Heart right ventricle (tissue), 16 donors: ENCODE measurements at regions of chr4 and their contacts with region 1.

Region 1: DNA sequence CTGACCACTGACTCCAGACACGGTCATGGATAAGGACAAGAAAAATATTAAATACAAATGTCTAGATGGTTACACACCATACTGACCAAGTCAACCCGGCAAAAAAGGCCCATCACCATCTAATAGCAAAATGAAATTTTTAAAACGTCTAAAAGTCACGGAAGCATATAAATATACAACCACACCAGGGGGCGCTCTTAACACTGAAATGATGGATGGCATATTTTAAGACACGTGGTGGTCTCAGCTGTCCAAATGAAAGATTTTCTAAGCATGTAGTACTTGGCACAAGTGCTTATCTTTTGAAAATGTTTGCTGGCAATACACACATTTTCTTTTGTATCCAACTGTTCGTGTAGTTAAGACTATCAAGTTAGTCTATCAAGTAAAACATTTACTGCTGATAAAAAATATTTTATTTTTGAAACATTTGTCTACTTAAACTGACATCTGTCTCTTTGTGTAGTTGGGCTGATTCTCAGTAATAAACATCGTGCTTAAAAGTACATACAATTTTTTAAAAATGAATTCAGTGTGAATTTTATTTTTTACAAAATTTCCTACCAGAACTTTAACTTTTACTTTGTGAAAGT is 64.6 kb downstream of the COX7B2 start:
- DNase-seq: peak in 1 of 2 donors; percentile 42
- ATAC-seq: no peak
- H3K4me3 ChIP-seq: no peak overlapping the region
- H3K27ac ChIP-seq: no peak overlapping the region
- H3K4me1 ChIP-seq: peaks cover 0 to 4% (median 0%) of the 10 kb centered on the region in 9 donors
- H3K27me3 ChIP-seq: no peaks in the 10 kb centered on the region
- CTCF ChIP-seq: peak in 8 of 9 donors; percentile 37 to 78 (median 69)

Region 2: DNA sequence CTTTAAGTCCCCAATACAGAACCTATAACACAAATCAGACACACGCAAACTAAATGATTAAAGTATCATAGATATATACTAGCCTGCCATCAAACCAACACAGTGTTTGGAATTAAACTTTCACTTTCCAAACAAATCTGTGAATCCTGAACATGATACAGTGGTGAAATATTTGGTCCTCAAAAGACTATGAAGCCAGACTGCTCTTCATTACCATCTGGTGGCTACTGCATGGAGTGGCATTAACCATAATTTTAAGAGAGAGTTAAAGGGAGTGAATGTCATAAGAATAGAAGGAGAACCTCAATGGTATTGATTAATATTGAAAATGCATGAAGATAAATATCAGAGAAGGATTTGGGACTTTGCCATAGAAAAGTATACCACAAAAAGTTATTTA is 158.2 kb after region 1 on chr4:
- intact Hi-C with region 1: loop called in 2 of 10 experiments (anchors 10 kb)
- DNase-seq: no peak
- ATAC-seq: peak in 3 of 8 donors; percentile 55 to 65 (median 58)
- H3K4me3 ChIP-seq: no peak overlapping the region
- H3K27ac ChIP-seq: no peak overlapping the region
- H3K4me1 ChIP-seq: peaks cover 0 to 9% (median 0%) of the 10 kb centered on the region in 9 donors
- H3K27me3 ChIP-seq: no peaks in the 10 kb centered on the region
- CTCF ChIP-seq: peak in 8 of 9 donors; percentile 5 to 59 (median 44)

Region 3: DNA sequence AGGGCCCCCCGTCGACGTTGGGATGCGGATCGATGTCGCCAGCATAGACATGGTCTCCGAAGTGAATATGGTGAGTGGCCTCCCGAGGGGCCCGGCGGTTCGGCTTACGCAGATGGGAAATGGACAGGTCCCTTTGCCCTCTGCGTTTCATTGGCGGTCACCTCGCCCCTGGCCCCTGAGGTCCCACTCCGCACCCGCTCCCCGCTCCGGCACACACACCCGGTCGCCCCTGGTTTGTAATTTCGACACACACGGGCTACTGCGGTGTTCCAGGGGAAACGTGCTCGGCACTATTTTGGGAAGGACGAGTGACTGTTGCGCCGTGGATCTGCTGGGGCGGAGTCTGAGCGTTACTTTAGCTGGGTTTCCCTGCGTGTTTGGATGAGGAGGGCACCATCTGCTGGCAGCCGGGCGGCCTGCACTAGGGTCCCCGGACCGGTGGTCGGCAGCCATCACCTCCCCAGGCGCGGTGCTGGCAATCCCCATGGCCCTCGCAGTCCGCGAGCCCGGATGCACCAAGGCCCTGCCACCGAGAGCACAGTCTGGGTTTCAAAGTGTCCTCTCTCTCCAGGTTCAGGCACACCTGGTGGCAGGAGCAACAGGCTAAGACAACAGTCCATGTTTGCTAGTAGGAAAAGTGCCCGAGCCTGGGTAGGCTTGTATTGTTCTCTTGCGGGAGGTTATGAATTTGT is 188.1 kb after region 1 on chr4:
- intact Hi-C with region 1: loop called in 9 of 10 experiments (anchors 2 to 10 kb)
- DNase-seq: peak; percentile 59 to 60
- ATAC-seq: peak; percentile 83 to 98 (median 96)
- H3K4me3 ChIP-seq: peak overlapping the region; percentile 9 to 60 (median 53)
- H3K27ac ChIP-seq: peak overlapping the region in 6 of 10 donors; percentile 5 to 80 (median 75)
- H3K4me1 ChIP-seq: peaks cover 0 to 15% (median 0%) of the 10 kb centered on the region in 9 donors
- H3K27me3 ChIP-seq: peaks cover 0 to 59% (median 15%) of the 10 kb centered on the region in 7 donors
- CTCF ChIP-seq: peak; percentile 39 to 77 (median 71)

Region 4: GRCh38 chr4:47038263-47038662 is 193.8 kb after region 1 on chr4:
- intact Hi-C with region 1: loop called in 9 of 10 experiments (anchors 2 to 10 kb)
- DNase-seq: no peak
- ATAC-seq: no peak
- H3K4me3 ChIP-seq: no peak overlapping the region
- H3K27ac ChIP-seq: no peak overlapping the region
- H3K4me1 ChIP-seq: peaks cover 0 to under 1% (median 0%) of the 10 kb centered on the region in 9 donors
- H3K27me3 ChIP-seq: peaks cover 0 to 23% (median 0%) of the 10 kb centered on the region in 7 donors
- CTCF ChIP-seq: no peak

Region 5: GRCh38 chr4:47122592-47123291 is 278.3 kb after region 1 on chr4:
- intact Hi-C with region 1: loop called in 6 of 10 experiments (anchors 5 to 10 kb)
- DNase-seq: peak in 1 of 2 donors; percentile 48
- ATAC-seq: peak in 5 of 8 donors; percentile 20 to 74 (median 64)
- H3K4me3 ChIP-seq: no peak overlapping the region
- H3K27ac ChIP-seq: no peak overlapping the region
- H3K4me1 ChIP-seq: peaks cover 0 to 4% (median 0%) of the 10 kb centered on the region in 9 donors
- H3K27me3 ChIP-seq: no peaks in the 10 kb centered on the region
- CTCF ChIP-seq: peak; percentile 47 to 84 (median 74)

Region 6: GRCh38 chr4:47383829-47384427 is 539.5 kb after region 1 on chr4:
- intact Hi-C with region 1: loop called in 7 of 10 experiments (anchors 5 to 10 kb)
- DNase-seq: no peak
- ATAC-seq: no peak
- H3K4me3 ChIP-seq: no peak overlapping the region
- H3K27ac ChIP-seq: no peak overlapping the region
- H3K4me1 ChIP-seq: peaks cover 0 to 3% (median 0%) of the 10 kb centered on the region in 9 donors
- H3K27me3 ChIP-seq: no peaks in the 10 kb centered on the region
- CTCF ChIP-seq: peak; percentile 18 to 72 (median 56)

Region 7: GRCh38 chr4:47933840-47934239 is 1089.4 kb after region 1 on chr4:
- intact Hi-C with region 1: loop called in 2 of 10 experiments (anchors 5 to 10 kb)
- DNase-seq: no peak
- ATAC-seq: peak in 2 of 8 donors; percentile 38 to 41
- H3K4me3 ChIP-seq: no peak overlapping the region
- H3K27ac ChIP-seq: no peak overlapping the region
- H3K4me1 ChIP-seq: peaks cover 0 to 16% (median 0%) of the 10 kb centered on the region in 9 donors
- H3K27me3 ChIP-seq: peaks cover 0 to 11% (median 0%) of the 10 kb centered on the region in 7 donors
- CTCF ChIP-seq: peak; percentile 34 to 77 (median 68)